K562 (cell line): ENCODE measurements at regions of chrX and their contacts with region 1.

Region 1: DNA sequence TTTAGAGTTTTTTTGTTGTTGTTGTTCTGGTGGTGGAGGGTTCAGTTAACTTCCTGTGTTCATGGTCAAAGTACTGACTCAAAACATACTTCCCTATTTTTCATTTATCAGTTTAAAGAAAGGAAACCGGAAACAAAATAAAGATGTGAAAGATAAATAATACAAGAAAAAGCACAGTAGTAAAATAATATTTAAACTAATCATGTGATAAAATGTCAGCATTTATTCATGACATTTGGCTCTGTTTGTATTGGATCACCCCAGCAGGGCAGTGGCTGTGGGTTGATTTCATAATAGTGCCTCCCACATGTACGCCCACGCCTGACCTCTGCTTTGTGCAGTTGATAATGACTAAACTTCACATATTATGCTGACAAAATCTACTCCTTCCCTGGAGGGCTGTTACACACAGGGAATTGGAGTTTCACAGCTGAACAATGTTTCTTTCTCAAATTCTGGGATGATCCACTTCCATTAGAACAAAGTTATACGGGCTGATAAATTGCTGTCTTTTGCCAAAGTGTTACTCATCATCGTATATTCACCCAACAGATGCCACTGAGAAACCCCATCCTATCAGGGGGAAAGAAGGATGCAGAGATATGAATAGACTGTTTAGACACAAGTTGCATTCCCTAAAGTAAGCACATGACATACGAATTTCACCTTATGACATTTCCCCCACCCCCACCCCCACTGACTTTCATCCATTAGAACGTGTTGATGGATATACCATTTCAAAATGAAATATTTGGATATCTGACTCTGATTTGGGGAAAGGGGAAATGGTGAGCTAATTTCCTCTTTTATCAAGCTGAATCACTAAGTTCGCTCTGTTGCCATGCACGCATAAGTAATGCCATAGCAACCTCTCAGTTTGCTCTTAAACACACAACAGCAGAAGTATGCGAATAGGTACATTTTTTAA is 48.3 kb downstream of the AMELX start:
- DNase-seq: peak; percentile 44 to 86 (median 54)
- ATAC-seq: peak; percentile 89
- H3K4me3 ChIP-seq: no peak overlapping the region
- H3K27ac ChIP-seq: peak overlapping the region; percentile 86
- H3K4me1 ChIP-seq: peaks cover 8 to 27% of the 10 kb centered on the region in 2 experiments; a peak in 3 of 5 replicates
- H3K27me3 ChIP-seq: no peaks in the 10 kb centered on the region
- CTCF ChIP-seq: no peak
- EP300 ChIP-seq: peak; percentile 81
- POLR2A ChIP-seq: no peak
- RAD21 ChIP-seq: peak in 1 of 2 experiments; percentile 25; a peak in 1 of 4 replicates

Region 2: GRCh38 chrX:11375614-11376119 is 34.1 kb after region 1 on chrX:
- CTCF ChIA-PET with region 1: no interaction called
- POLR2A ChIA-PET with region 1: no interaction called
- in situ Hi-C with region 1: no loop called
- intact Hi-C with region 1: loop called (anchors 5 kb)
- DNase-seq: peak; percentile 45 to 90 (median 58)
- ATAC-seq: peak; percentile 96
- H3K4me3 ChIP-seq: no peak overlapping the region
- H3K27ac ChIP-seq: peak overlapping the region; percentile 91
- H3K4me1 ChIP-seq: peaks cover 8 to 41% of the 10 kb centered on the region in 2 experiments
- H3K27me3 ChIP-seq: no peaks in the 10 kb centered on the region
- CTCF ChIP-seq: no peak
- EP300 ChIP-seq: peak; percentile 95
- POLR2A ChIP-seq: no peak
- RAD21 ChIP-seq: no peak